Breast epithelium (tissue), 4 donors: ENCODE measurements at regions of chr18 and their contacts with region 1.

Region 1: DNA sequence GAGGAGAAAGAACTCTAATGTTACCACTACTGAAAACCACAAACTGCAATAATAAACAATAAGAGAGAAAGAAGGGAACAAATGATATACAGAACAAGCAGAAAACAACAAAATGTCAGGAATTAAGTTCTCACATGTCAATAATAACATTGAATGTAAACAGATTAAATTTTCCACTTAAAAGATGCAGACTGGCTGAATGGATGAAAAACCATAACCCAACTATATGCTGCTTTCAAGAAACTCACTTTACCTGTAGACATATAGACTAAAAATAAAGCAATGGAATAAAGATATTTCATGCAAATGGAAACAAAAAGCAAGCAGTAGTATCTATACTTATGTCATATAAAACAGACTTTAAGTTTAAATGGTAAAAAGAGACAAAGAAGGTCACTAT is 50.4 kb downstream of the MRO start:
- DNase-seq: no peak
- H3K4me3 ChIP-seq: no peak overlapping the region
- H3K27ac ChIP-seq: no peak overlapping the region
- H3K4me1 ChIP-seq: no peaks in the 10 kb centered on the region
- H3K27me3 ChIP-seq: no peaks in the 10 kb centered on the region
- CTCF ChIP-seq: no peak
- POLR2A ChIP-seq: no peak

Region 2: DNA sequence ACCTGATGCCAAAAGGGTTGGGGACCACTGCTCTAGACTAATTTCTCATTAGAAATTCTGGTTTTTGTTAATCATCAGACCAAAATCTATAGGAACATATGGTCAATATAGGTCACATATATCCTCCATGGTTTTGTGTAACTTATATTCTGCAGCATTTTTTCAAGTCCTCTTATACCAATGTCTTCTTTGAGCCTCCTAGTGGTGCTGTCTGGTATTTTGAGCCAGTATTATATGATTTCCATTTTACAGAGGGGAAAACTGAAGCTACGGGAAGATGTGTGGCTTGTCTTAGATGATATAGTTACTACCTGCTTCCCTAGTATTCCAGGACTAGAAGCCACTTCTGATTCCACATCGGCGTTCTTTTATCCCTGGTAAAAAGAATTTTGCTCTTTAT is 195.8 kb before region 1 on chr18:
- intact Hi-C with region 1: no loop called
- DNase-seq: no peak
- H3K4me3 ChIP-seq: no peak overlapping the region
- H3K27ac ChIP-seq: no peak overlapping the region
- H3K4me1 ChIP-seq: no peaks in the 10 kb centered on the region
- H3K27me3 ChIP-seq: no peaks in the 10 kb centered on the region
- CTCF ChIP-seq: no peak
- POLR2A ChIP-seq: no peak

Region 3: GRCh38 chr18:50967714-50968661 is 198.5 kb after region 1 on chr18 and contains the start of gene ELAC1:
- intact Hi-C with region 1: no loop called
- DNase-seq: peak; percentile 56 to 58
- H3K4me3 ChIP-seq: peak within 1 kb of the TSS; percentile 67 to 94 (median 93)
- H3K27ac ChIP-seq: peak within 1 kb of the TSS; percentile 98 to 99
- H3K4me1 ChIP-seq: peaks cover 0 to 14% of the 10 kb centered on the region in 2 donors
- H3K27me3 ChIP-seq: no peaks in the 10 kb centered on the region
- CTCF ChIP-seq: no peak
- POLR2A ChIP-seq: peak; percentile 37
- total RNA-seq, gene ELAC1: 4.8 to 6.9 (median 5.8) TPM

Region 4: GRCh38 chr18:52439457-52439856 is 1670.0 kb after region 1 on chr18:
- intact Hi-C with region 1: loop called (anchors 5 kb)
- DNase-seq: no peak
- H3K4me3 ChIP-seq: no peak overlapping the region
- H3K27ac ChIP-seq: no peak overlapping the region
- H3K4me1 ChIP-seq: no peaks in the 10 kb centered on the region
- H3K27me3 ChIP-seq: no peaks in the 10 kb centered on the region
- CTCF ChIP-seq: no peak
- POLR2A ChIP-seq: no peak